Naive thymus-derived CD4-positive, alpha-beta T cell (primary cell): ENCODE measurements at regions of chr22 and their contacts with region 1.

Region 1: DNA sequence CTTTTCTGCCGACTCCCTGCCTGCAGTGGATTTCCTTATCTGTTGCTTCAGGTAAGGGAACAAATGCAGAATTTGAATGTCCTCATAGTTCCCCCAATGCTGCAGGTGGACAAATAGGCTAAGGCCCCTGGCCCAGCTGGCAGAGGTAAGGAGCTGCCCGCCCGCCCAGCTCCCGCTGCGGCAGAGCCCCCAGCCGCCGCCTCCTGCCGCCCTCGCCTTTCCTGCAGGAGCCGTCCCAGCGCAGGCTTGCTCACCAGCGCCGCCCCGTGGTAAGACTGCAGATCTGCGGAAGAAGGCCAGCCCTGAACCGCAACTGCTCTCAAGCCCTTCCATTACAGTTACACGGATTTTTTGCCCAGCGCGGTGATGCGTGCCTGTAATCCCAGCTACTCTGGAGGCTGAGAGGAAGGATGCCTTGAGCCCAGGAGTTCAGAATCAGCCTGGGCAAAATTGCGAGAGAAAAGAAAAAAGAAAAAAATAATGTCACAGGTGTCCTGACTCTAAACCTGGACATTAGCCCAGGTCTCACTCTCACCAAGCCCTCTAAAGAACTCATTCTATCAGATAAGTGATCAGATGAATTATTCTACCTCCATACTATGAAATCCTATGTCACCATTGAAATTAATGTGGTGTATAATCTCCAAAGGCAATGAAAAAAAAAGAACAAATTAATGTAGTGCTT is 51.2 kb upstream of the EMID1 start:
- DNase-seq: peak; percentile 21 to 82 (median 58)
- ATAC-seq: peak; percentile 82
- H3K4me3 ChIP-seq: no peak overlapping the region
- H3K4me3 Mint-ChIP-seq: peak overlapping the region in 8 of 10 donors; percentile 25 to 68 (median 56)
- H3K27ac ChIP-seq: no peak overlapping the region
- H3K27ac Mint-ChIP-seq: no peak overlapping the region
- H3K4me1 ChIP-seq: no peaks in the 10 kb centered on the region
- H3K4me1 Mint-ChIP-seq: peaks cover 7 to 18% (median 8%) of the 10 kb centered on the region in 7 donors
- H3K27me3 ChIP-seq: no peaks in the 10 kb centered on the region
- H3K27me3 Mint-ChIP-seq: peaks cover 18 to 34% (median 26%) of the 10 kb centered on the region in 5 donors

Region 2: DNA sequence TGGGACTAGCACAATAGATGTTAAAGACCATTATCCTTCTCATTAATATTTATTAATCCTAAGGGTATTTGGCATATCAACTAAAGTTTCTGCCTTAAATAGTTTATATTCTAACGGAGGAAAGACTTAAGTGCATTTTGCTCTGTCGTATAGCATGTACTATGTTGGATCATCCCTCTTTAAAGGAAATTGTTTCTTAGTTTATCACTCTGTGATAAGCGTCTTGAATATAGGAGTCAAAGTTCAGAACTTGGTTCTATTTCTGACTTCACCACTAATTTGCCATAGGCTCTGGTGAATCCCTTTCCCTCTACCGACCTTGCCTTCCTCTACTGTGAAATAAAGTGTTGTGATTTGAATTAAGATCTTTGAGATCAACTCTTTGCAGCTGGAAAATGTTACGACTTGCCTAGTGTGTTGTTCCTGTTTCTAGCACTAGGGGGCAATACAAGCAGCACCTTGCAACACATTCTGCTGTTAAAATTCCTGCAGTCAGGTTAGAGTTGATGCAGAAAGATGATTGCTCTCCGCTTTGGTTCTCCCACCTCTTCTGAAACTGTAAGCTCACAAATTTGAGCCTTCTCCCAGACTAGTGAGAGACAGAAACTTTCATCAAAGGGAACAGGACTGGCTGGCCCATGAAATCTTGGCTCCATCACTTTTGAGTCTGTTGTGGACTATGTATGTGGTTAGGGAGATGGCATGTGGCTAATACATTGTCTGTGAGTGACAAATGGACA is 299.0 kb before region 1 on chr22:
- CTCF ChIA-PET with region 1: no interaction called
- POLR2A ChIA-PET with region 1: no interaction called
- intact Hi-C with region 1: loop called in 1 of 2 experiments (anchors 1 kb)
- DNase-seq: peak in 8 of 9 donors; percentile 29 to 70 (median 58)
- ATAC-seq: peak; percentile 68
- H3K4me3 ChIP-seq: no peak overlapping the region
- H3K4me3 Mint-ChIP-seq: no peak overlapping the region
- H3K27ac ChIP-seq: no peak overlapping the region
- H3K27ac Mint-ChIP-seq: no peak overlapping the region
- H3K4me1 ChIP-seq: no peaks in the 10 kb centered on the region
- H3K4me1 Mint-ChIP-seq: no peaks in the 10 kb centered on the region
- H3K27me3 ChIP-seq: no peaks in the 10 kb centered on the region
- H3K27me3 Mint-ChIP-seq: peaks cover 3 to 18% (median 5%) of the 10 kb centered on the region in 5 donors

Region 3: GRCh38 chr22:29072193-29072978 is 82.1 kb before region 1 on chr22:
- CTCF ChIA-PET with region 1: no interaction called
- POLR2A ChIA-PET with region 1: no interaction called
- intact Hi-C with region 1: no loop called
- DNase-seq: peak; percentile 72 to 87 (median 84)
- ATAC-seq: peak; percentile 98
- H3K4me3 ChIP-seq: peak overlapping the region; percentile 46
- H3K4me3 Mint-ChIP-seq: peak overlapping the region; percentile 69 to 90 (median 82)
- H3K27ac ChIP-seq: no peak overlapping the region
- H3K27ac Mint-ChIP-seq: peak overlapping the region in 1 of 9 donors; percentile 44
- H3K4me1 ChIP-seq: peaks cover 19 to 21% of the 10 kb centered on the region in 2 donors
- H3K4me1 Mint-ChIP-seq: peaks cover 15 to 26% (median 23%) of the 10 kb centered on the region in 7 donors
- H3K27me3 ChIP-seq: peaks cover 17 to 26% of the 10 kb centered on the region in 2 donors
- H3K27me3 Mint-ChIP-seq: peaks cover 40 to 69% (median 44%) of the 10 kb centered on the region in 5 donors

Region 4: GRCh38 chr22:29124777-29125442 is 29.6 kb before region 1 on chr22:
- CTCF ChIA-PET with region 1: no interaction called
- POLR2A ChIA-PET with region 1: no interaction called
- intact Hi-C with region 1: loop called in 1 of 2 experiments (anchors 1 kb)
- DNase-seq: no peak
- ATAC-seq: no peak
- H3K4me3 ChIP-seq: no peak overlapping the region
- H3K4me3 Mint-ChIP-seq: no peak overlapping the region
- H3K27ac ChIP-seq: no peak overlapping the region
- H3K27ac Mint-ChIP-seq: no peak overlapping the region
- H3K4me1 ChIP-seq: no peaks in the 10 kb centered on the region
- H3K4me1 Mint-ChIP-seq: peaks cover 0 to 10% (median 0%) of the 10 kb centered on the region in 7 donors
- H3K27me3 ChIP-seq: no peaks in the 10 kb centered on the region
- H3K27me3 Mint-ChIP-seq: peaks cover under 1 to 10% (median 6%) of the 10 kb centered on the region in 5 donors